ENCODE measurements at regions of chr12 and their contacts with region 1.

Region 1: DNA sequence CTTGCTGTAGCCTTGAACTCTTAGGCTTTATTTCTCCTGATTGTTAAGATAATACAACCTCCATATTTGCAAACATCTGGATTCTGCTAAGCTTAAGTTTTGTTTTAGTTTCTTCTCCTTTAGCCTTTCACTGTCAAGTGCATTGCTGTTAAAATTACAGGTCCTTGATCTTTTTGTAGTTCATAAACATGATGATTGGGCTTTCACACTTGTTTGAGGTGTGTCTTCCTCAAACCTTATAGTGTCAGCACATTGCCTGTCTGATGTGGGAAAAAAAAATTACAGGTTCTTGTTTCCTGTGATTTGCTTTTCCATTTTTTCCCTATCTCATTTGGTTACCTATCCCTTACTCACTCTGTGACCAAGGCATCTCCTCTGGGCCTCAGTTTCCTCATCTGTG is 59.2 kb downstream of the BICDL1 start:
- DNase-seq: peak in 2 of 9 experiments; percentile 34 to 66
- ATAC-seq: peak; percentile 84
- H3K4me3 ChIP-seq: no peak overlapping the region
- H3K4me3 Mint-ChIP-seq: peak overlapping the region; percentile 10
- H3K27ac ChIP-seq: peak overlapping the region in 1 of 2 experiments; percentile 53
- H3K27ac Mint-ChIP-seq: peak overlapping the region; percentile 82
- H3K4me1 ChIP-seq: peaks cover 9% of the 10 kb centered on the region
- H3K4me1 Mint-ChIP-seq: peaks cover 48% of the 10 kb centered on the region
- H3K27me3 ChIP-seq: no peaks in the 10 kb centered on the region
- H3K27me3 Mint-ChIP-seq: no peaks in the 10 kb centered on the region
- CTCF ChIP-seq: no peak

Region 2: GRCh38 chr12:120012067-120012621 is 36.1 kb before region 1 on chr12:
- CTCF ChIA-PET with region 1: no interaction called
- POLR2A ChIA-PET with region 1: interaction called, 4 read pairs
- intact Hi-C with region 1: loop called (anchors 2 to 5 kb)
- DNase-seq: peak in 8 of 9 experiments; percentile 23 to 97 (median 71)
- ATAC-seq: peak; percentile 61
- H3K4me3 ChIP-seq: no peak overlapping the region
- H3K4me3 Mint-ChIP-seq: peak overlapping the region; percentile 76
- H3K27ac ChIP-seq: peak overlapping the region; percentile 52 to 73
- H3K27ac Mint-ChIP-seq: peak overlapping the region; percentile 99
- H3K4me1 ChIP-seq: peaks cover 69% of the 10 kb centered on the region
- H3K4me1 Mint-ChIP-seq: peaks cover 83% of the 10 kb centered on the region
- H3K27me3 ChIP-seq: no peaks in the 10 kb centered on the region
- H3K27me3 Mint-ChIP-seq: no peaks in the 10 kb centered on the region
- CTCF ChIP-seq: no peak

Region 3: DNA sequence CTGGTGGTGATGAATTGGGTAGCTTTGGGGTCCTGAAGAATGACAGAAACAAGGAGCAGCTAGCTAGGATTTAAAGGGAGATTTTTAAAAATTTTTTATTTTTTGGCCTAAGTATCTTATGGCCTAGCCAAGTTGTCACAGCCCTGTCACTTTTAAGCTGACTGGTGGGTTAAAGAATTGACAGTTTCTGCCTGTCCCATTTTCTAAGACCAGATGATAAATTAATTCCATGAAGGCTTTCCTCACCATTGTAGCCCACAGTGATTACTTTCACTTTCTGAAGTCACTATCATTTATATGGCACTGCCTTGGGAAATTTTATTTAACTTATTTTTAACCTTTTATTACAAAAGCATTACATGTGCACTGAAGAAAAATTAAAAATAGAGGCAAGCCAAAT is 16.0 kb before region 1 on chr12:
- CTCF ChIA-PET with region 1: no interaction called
- POLR2A ChIA-PET with region 1: no interaction called
- intact Hi-C with region 1: loop called in 1 of 2 experiments (anchors 2 kb)
- DNase-seq: no peak
- ATAC-seq: no peak
- H3K4me3 ChIP-seq: no peak overlapping the region
- H3K4me3 Mint-ChIP-seq: no peak overlapping the region
- H3K27ac ChIP-seq: no peak overlapping the region
- H3K27ac Mint-ChIP-seq: no peak overlapping the region
- H3K4me1 ChIP-seq: no peaks in the 10 kb centered on the region
- H3K4me1 Mint-ChIP-seq: peaks cover 4% of the 10 kb centered on the region
- H3K27me3 ChIP-seq: no peaks in the 10 kb centered on the region
- H3K27me3 Mint-ChIP-seq: no peaks in the 10 kb centered on the region
- CTCF ChIP-seq: no peak

Region 4: GRCh38 chr12:120104924-120105323 is 56.7 kb after region 1 on chr12:
- CTCF ChIA-PET with region 1: no interaction called
- POLR2A ChIA-PET with region 1: no interaction called
- intact Hi-C with region 1: no loop called
- DNase-seq: no peak
- ATAC-seq: no peak
- H3K4me3 ChIP-seq: no peak overlapping the region
- H3K4me3 Mint-ChIP-seq: no peak overlapping the region
- H3K27ac ChIP-seq: no peak overlapping the region
- H3K27ac Mint-ChIP-seq: no peak overlapping the region
- H3K4me1 ChIP-seq: peaks cover 20% of the 10 kb centered on the region
- H3K4me1 Mint-ChIP-seq: peaks cover 46% of the 10 kb centered on the region
- H3K27me3 ChIP-seq: no peaks in the 10 kb centered on the region
- H3K27me3 Mint-ChIP-seq: no peaks in the 10 kb centered on the region
- CTCF ChIP-seq: no peak

Region 5: GRCh38 chr12:121712461-121713256 is 1664.4 kb after region 1 on chr12 and contains the start of gene TMEM120B:
- CTCF ChIA-PET with region 1: no interaction called
- POLR2A ChIA-PET with region 1: no interaction called
- intact Hi-C with region 1: no loop called
- DNase-seq: peak; percentile 70 to 92 (median 85)
- ATAC-seq: peak; percentile 92
- H3K4me3 ChIP-seq: peak within 1 kb of the TSS; percentile 96 to 100
- H3K4me3 Mint-ChIP-seq: peak within 1 kb of the TSS; percentile 92
- H3K27ac ChIP-seq: peak within 1 kb of the TSS; percentile 73 to 89
- H3K27ac Mint-ChIP-seq: peak within 1 kb of the TSS; percentile 91
- H3K4me1 ChIP-seq: peaks cover 17% of the 10 kb centered on the region
- H3K4me1 Mint-ChIP-seq: peaks cover 31% of the 10 kb centered on the region
- H3K27me3 ChIP-seq: no peaks in the 10 kb centered on the region
- H3K27me3 Mint-ChIP-seq: no peaks in the 10 kb centered on the region
- CTCF ChIP-seq: no peak
- total RNA-seq, gene TMEM120B: 6.4 to 7.3 TPM

Measured in CD8-positive, alpha-beta T cell (primary cell).